RWPE1 (cell line): ENCODE measurements at regions of chr9 and their contacts with region 1.

Region 1: DNA sequence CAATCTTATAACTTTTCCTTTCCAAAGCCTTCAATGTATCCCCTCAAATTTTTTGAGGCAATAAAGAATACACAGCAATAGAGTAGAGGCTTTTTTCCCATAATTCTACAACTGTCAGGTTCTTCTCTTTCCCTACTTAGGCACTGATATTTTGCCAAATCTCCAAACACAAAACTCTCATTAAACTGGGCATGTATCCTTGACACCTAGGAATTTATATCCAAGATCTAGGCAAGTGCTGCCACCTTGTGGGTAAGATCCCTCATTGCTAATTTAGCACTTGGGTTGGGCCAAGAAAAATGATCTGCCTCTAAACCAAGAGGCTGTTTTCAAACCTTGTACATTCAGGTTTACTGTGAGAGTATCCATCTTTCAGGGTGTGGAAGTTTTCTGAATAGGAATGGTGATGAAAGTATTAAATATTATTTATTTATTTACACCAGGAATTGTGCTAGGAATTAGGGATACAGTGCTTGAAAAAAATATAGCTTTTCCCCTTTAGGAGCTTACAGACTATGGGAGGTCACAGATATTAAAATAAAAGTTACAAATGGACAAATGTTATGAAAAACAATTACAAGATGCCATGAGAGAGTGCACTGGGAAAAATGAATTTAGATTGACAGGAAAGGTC is 17.6 kb downstream of the TSTD2 start:
- DNase-seq: peak; percentile 78
- H3K27ac ChIP-seq: no peak overlapping the region
- CTCF ChIP-seq: peak; percentile 96

Region 2: GRCh38 chr9:97411440-97411788 is 204.1 kb before region 1 on chr9:
- CTCF ChIA-PET with region 1: interaction called, 11 read pairs
- POLR2A ChIA-PET with region 1: no interaction called
- DNase-seq: no peak
- H3K27ac ChIP-seq: no peak overlapping the region
- CTCF ChIP-seq: no peak

Region 3: DNA sequence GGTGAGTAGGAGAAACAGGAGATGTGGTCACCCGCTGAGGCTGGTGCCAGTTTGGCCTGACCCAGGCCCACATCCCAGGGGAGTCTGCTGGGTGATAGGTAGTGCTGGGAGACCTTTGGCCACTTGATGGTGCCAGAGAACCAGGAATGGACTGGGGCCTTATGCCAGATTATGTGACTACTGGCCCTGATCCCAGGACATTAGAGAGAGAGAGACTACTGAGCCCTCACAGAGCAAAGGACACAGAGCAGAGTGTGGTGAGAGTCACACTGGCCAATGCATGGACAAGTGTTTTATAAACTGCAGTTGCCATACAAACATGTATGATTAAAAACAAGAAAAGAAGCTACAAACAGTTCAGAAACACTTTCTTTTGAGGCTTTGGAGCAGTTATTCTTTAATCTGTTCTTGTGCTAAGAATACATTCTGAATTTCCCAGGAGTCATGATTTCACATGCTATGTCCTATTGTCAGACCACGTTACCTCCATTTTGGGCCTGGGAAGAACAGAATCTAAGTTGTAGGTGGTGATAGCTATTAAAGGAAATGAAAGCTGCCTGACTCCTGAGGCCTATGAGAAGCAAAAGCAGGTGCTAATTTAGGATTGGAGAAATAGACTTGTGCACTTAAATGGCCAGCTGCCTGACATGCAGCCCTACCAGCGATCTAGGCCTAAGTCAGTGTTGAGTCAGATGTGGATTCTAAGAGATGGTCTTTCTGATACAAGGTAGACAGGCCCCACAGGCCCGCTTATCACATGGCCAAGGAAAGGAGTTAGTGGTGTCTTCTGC is 146.7 kb before region 1 on chr9:
- CTCF ChIA-PET with region 1: interaction called, 74 read pairs
- POLR2A ChIA-PET with region 1: no interaction called
- DNase-seq: peak; percentile 84
- H3K27ac ChIP-seq: no peak overlapping the region
- CTCF ChIP-seq: peak; percentile 83

Region 4: GRCh38 chr9:97501177-97501971 is 114.2 kb before region 1 on chr9 and contains the start of gene TMOD1:
- CTCF ChIA-PET with region 1: interaction called, 10 read pairs
- POLR2A ChIA-PET with region 1: no interaction called
- DNase-seq: peak; percentile 93
- H3K27ac ChIP-seq: no peak within 1 kb of the TSS
- CTCF ChIP-seq: peak; percentile 70

Region 5: GRCh38 chr9:97651646-97652045 is 36.1 kb after region 1 on chr9:
- CTCF ChIA-PET with region 1: no interaction called
- POLR2A ChIA-PET with region 1: no interaction called
- DNase-seq: no peak
- H3K27ac ChIP-seq: no peak overlapping the region
- CTCF ChIP-seq: no peak